A549 (cell line): ENCODE measurements at regions of chr1 and their contacts with region 1.

Region 1: DNA sequence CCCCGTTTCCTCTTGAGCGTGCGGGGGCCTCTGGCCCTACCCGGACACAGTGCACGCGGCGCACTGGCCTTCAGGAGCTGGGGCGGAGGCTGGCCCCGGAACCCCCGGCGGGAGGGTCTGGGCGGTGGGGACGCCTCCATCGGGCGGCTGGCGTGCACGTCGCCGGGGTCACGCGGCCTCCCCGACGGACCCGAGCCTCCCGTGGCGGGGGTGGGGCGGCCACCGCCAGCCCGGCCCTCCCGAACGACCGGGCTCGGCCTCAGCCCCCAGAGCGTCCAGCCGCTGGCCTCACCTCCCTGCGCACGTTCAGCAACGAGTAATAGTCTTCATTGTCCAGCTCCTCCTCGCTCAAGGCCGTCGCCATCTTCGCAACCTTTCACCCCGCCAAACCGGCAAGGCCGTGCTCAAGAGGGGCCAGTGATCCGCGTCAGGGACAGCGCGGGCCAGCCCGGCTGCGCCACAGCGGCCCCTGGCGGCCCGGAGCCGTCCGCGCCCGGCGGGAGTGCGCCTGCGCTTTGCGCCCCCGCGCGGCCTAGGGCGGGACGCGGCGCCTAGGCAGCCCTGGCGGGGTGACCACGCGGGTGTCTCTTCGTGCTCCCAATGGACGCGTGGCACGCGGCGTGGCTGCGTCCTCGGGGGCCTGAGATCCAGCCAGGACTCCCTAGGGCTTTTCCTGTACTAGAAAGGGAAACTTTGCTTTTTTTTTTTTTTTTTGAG is at the start of gene DNAJC11:
- DNase-seq: peak; percentile 70 to 90
- ATAC-seq: peak; percentile 94 to 96
- H3K4me3 ChIP-seq: peak within 1 kb of the TSS; percentile 76
- H3K27ac ChIP-seq: peak within 1 kb of the TSS; percentile 80 to 94
- H3K4me1 ChIP-seq: peaks cover 10% of the 10 kb centered on the region; the same call in 1 of the 3 replicates
- CTCF ChIP-seq: peak; percentile 88
- EP300 ChIP-seq: no peak
- POLR2A ChIP-seq: peak; percentile 25; the same call in 1 of the 2 replicates
- RAD21 ChIP-seq: no peak
- polyA plus RNA-seq, gene DNAJC11: 29.9 and 35.7 TPM in 2 replicates

Region 2: GRCh38 chr1:6691507-6691906 is 10.1 kb before region 1 on chr1:
- CTCF ChIA-PET with region 1: interaction called, 22 read pairs
- POLR2A ChIA-PET with region 1: no interaction called
- DNase-seq: no peak
- ATAC-seq: no peak
- H3K4me3 ChIP-seq: no peak overlapping the region
- H3K27ac ChIP-seq: no peak overlapping the region
- H3K4me1 ChIP-seq: no peaks in the 10 kb centered on the region
- CTCF ChIP-seq: no peak
- EP300 ChIP-seq: no peak
- POLR2A ChIP-seq: no peak
- RAD21 ChIP-seq: no peak

Region 3: GRCh38 chr1:6724516-6725141 is 23.0 kb after region 1 on chr1:
- CTCF ChIA-PET with region 1: interaction called, 14 read pairs
- POLR2A ChIA-PET with region 1: no interaction called
- DNase-seq: peak; percentile 54 to 63
- ATAC-seq: peak; percentile 86 to 89
- H3K4me3 ChIP-seq: no peak overlapping the region
- H3K27ac ChIP-seq: peak overlapping the region; percentile 30 to 69; a peak in 3 of 6 replicates
- H3K4me1 ChIP-seq: peaks cover 14% of the 10 kb centered on the region; the same call in 2 of the 3 replicates
- CTCF ChIP-seq: no peak
- EP300 ChIP-seq: no peak
- POLR2A ChIP-seq: no peak
- RAD21 ChIP-seq: no peak